ENCODE measurements at regions of chr22 and their contacts with region 1.

Region 1: GRCh38 chr22:20495861-20496681 is 476 bp upstream of the KLHL22 start:
- DNase-seq: peak; percentile 96
- ATAC-seq: peak; percentile 95
- H3K4me3 Mint-ChIP-seq: peak overlapping the region; percentile 76
- H3K27ac Mint-ChIP-seq: peak overlapping the region; percentile 70
- H3K4me1 Mint-ChIP-seq: peaks cover 29% of the 10 kb centered on the region
- H3K27me3 Mint-ChIP-seq: no peaks in the 10 kb centered on the region

Region 2: GRCh38 chr22:20156611-20157429 is 339.3 kb before region 1 on chr22:
- CTCF ChIA-PET with region 1: no interaction called
- POLR2A ChIA-PET with region 1: no interaction called
- intact Hi-C with region 1: loop called in 1 of 2 experiments (anchors 2 kb)
- DNase-seq: peak; percentile 92
- ATAC-seq: peak; percentile 91
- H3K4me3 Mint-ChIP-seq: no peak overlapping the region
- H3K27ac Mint-ChIP-seq: no peak overlapping the region
- H3K4me1 Mint-ChIP-seq: peaks cover 2% of the 10 kb centered on the region
- H3K27me3 Mint-ChIP-seq: no peaks in the 10 kb centered on the region

Region 3: GRCh38 chr22:20393909-20394691 is 102.0 kb before region 1 on chr22 and contains the start of gene ZNF74:
- CTCF ChIA-PET with region 1: no interaction called
- POLR2A ChIA-PET with region 1: no interaction called
- intact Hi-C with region 1: loop called in 1 of 2 experiments (anchors 1 kb)
- DNase-seq: peak; percentile 90
- ATAC-seq: peak; percentile 95
- H3K4me3 Mint-ChIP-seq: peak within 1 kb of the TSS; percentile 77
- H3K27ac Mint-ChIP-seq: peak within 1 kb of the TSS; percentile 86
- H3K4me1 Mint-ChIP-seq: peaks cover 24% of the 10 kb centered on the region
- H3K27me3 Mint-ChIP-seq: no peaks in the 10 kb centered on the region
- total RNA-seq, gene ZNF74: 6.5 to 10.3 TPM

Region 4: DNA sequence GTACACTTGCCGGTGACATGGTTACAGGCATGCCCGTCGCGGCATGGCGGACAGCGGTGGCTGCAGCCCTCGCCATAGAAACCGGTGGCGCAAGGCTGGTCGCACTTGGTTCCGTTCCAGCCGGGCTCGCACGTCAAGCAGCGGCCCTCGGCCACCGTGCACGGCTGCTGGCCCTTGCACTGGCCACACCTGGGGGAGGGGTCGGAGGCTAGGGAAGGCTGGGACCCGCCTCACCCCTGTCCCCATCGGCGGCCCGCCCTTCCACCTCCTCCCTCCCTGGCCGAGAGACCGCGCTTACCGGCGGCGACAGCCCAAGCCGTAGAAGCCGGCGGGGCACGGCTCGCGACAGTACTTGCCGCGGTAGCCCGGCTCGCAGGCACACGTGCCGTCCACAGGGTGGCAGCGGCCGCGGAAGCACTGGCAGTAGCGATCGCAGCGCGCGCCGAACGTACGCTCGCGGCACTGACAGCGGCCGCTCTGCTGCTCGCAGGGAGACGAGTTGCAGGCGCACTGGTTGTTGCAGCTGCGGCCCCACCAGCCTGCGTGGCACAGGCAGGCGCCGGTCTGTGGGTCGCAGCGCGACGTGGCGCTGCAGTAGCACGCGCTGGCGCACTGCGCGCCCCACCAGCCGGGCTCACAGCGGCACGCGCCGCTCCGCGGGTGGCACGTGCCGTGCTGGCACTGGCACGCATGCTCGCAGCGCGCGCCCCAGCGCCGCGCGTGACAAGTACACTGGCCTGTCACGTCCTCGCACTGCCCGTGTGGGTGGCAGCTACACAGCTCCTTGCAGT is 65.2 kb before region 1 on chr22:
- CTCF ChIA-PET with region 1: no interaction called
- POLR2A ChIA-PET with region 1: no interaction called
- intact Hi-C with region 1: loop called in 1 of 2 experiments (anchors 1 kb)
- DNase-seq: peak; percentile 79
- ATAC-seq: peak; percentile 57
- H3K4me3 Mint-ChIP-seq: peak overlapping the region; percentile 45
- H3K27ac Mint-ChIP-seq: no peak overlapping the region
- H3K4me1 Mint-ChIP-seq: peaks cover 12% of the 10 kb centered on the region
- H3K27me3 Mint-ChIP-seq: peaks cover 51% of the 10 kb centered on the region

Region 5: GRCh38 chr22:20463324-20464095 is 32.6 kb before region 1 on chr22:
- CTCF ChIA-PET with region 1: interaction called, 10 read pairs
- POLR2A ChIA-PET with region 1: no interaction called
- intact Hi-C with region 1: loop called in 1 of 2 experiments (anchors 5 kb)
- DNase-seq: no peak
- ATAC-seq: peak; percentile 31
- H3K4me3 Mint-ChIP-seq: no peak overlapping the region
- H3K27ac Mint-ChIP-seq: peak overlapping the region; percentile 94
- H3K4me1 Mint-ChIP-seq: peaks cover 53% of the 10 kb centered on the region
- H3K27me3 Mint-ChIP-seq: no peaks in the 10 kb centered on the region

Region 6: GRCh38 chr22:20624161-20624616 is 128.1 kb after region 1 on chr22:
- CTCF ChIA-PET with region 1: no interaction called
- POLR2A ChIA-PET with region 1: no interaction called
- intact Hi-C with region 1: no loop called
- DNase-seq: peak; percentile 81
- ATAC-seq: peak; percentile 93
- H3K4me3 Mint-ChIP-seq: no peak overlapping the region
- H3K27ac Mint-ChIP-seq: no peak overlapping the region
- H3K4me1 Mint-ChIP-seq: peaks cover 20% of the 10 kb centered on the region
- H3K27me3 Mint-ChIP-seq: no peaks in the 10 kb centered on the region

Region 7: DNA sequence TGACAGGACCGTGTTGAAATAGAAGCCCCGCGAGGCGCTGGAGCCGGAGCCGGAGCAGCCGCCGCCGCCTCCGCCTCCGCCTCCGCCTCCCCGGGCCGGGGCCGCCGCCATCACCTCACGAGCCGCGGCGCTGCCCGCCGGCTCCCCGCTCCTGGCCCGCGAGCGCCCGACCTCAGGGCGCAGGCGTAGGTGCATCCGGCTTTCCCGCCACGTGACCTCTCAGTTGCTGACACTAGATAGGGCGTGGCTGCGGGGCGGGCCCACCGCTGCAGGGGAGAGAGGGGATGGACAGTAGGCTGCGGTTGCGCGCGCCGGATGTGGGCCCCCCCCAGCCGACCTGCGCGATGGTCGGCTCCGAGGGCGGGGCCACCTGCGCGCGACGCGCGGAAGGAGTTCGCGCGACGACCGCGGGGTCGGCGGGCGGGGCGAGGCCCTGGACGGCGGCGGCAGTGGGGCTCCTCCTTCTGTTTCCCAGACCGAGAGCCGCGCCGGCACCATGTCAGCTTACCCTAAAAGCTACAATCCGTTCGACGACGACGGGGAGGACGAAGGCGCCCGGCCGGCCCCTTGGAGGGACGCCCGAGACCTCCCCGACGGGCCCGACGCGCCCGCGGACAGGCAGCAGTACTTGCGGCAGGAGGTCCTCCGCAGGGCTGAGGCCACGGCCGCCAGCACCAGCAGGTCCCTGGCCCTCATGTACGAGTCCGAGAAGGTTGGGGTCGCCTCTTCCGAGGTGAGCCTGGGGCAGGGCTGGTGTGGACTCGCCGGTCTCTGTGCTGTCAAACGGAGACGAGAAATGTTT is 362.7 kb after region 1 on chr22 and contains the starts of genes PI4KA and SNAP29:
- CTCF ChIA-PET with region 1: no interaction called
- POLR2A ChIA-PET with region 1: no interaction called
- intact Hi-C with region 1: loop called in 1 of 2 experiments (anchors 1 kb)
- DNase-seq: peak; percentile 99
- ATAC-seq: peak; percentile 95
- H3K4me3 Mint-ChIP-seq: peak within 1 kb of the TSS; percentile 87
- H3K27ac Mint-ChIP-seq: peak within 1 kb of the TSS; percentile 79
- H3K4me1 Mint-ChIP-seq: peaks cover 46% of the 10 kb centered on the region
- H3K27me3 Mint-ChIP-seq: no peaks in the 10 kb centered on the region
- total RNA-seq, gene PI4KA: 52.8 TPM
- total RNA-seq, gene SNAP29: 22.8 to 33.8 TPM